Activated B cell treated with CpG ODN at 0.5 μM for 24 hours (primary cell): ENCODE measurements at regions of chr11 and their contacts with region 1.

Region 1: GRCh38 chr11:128342511-128343134 is 244.7 kb downstream of the ETS1 start:
- DNase-seq: no peak
- ATAC-seq: peak; percentile 87
- H3K4me3 Mint-ChIP-seq: no peak overlapping the region
- H3K27ac Mint-ChIP-seq: peak overlapping the region; percentile 76
- H3K4me1 Mint-ChIP-seq: peaks cover 37% of the 10 kb centered on the region
- H3K27me3 Mint-ChIP-seq: no peaks in the 10 kb centered on the region
- CTCF ChIP-seq: no peak

Region 2: DNA sequence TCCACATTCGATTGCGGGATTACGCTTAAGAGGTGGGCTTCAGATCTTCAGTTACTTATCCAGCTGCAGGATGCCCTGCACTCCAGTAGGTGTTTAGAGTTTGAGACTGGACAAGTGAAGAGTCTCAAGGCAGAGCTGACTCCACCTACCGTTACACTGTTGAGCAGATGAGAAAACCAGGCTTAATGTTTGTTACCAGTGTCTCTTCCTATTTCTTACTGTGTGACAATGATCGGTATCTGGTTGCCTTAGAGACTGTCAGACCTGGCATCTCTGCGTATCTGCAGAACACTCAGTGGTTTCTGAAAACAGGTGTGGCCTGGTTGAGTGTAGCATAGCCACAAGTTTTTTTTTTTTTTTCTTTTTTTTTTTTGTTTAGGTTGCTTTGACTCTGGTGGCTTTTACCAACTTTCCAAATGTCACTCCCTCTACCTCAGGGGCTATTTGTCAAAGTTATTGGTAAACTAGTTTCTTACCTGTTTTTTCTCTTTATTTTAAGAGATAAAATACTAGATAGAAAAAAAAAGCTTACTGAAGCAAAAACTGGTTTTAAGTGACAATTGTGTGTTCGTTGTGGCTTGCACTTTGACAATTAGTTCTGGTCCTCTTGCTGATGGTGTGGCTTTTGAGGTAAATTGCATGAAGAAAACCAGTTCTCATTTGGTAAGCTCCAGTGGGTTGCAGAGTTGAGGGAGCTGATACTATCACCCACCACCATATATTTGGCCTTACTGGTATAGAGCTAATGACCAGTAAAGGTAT is 40.0 kb before region 1 on chr11:
- CTCF ChIA-PET with region 1: no interaction called
- POLR2A ChIA-PET with region 1: interaction called, 10 read pairs
- intact Hi-C with region 1: no loop called
- DNase-seq: no peak
- ATAC-seq: peak; percentile 89
- H3K4me3 Mint-ChIP-seq: peak overlapping the region; percentile 21
- H3K27ac Mint-ChIP-seq: peak overlapping the region; percentile 81
- H3K4me1 Mint-ChIP-seq: peaks cover 73% of the 10 kb centered on the region
- H3K27me3 Mint-ChIP-seq: no peaks in the 10 kb centered on the region
- CTCF ChIP-seq: no peak

Region 3: GRCh38 chr11:128361451-128362020 is 18.9 kb after region 1 on chr11:
- CTCF ChIA-PET with region 1: no interaction called
- POLR2A ChIA-PET with region 1: no interaction called
- intact Hi-C with region 1: loop called (anchors 2 kb)
- DNase-seq: no peak
- ATAC-seq: peak; percentile 86
- H3K4me3 Mint-ChIP-seq: peak overlapping the region; percentile 6
- H3K27ac Mint-ChIP-seq: peak overlapping the region; percentile 73
- H3K4me1 Mint-ChIP-seq: peaks cover 18% of the 10 kb centered on the region
- H3K27me3 Mint-ChIP-seq: no peaks in the 10 kb centered on the region
- CTCF ChIP-seq: no peak